GM13976 (cell line): ENCODE measurements at regions of chr12 and their contacts with region 1.

Region 1: DNA sequence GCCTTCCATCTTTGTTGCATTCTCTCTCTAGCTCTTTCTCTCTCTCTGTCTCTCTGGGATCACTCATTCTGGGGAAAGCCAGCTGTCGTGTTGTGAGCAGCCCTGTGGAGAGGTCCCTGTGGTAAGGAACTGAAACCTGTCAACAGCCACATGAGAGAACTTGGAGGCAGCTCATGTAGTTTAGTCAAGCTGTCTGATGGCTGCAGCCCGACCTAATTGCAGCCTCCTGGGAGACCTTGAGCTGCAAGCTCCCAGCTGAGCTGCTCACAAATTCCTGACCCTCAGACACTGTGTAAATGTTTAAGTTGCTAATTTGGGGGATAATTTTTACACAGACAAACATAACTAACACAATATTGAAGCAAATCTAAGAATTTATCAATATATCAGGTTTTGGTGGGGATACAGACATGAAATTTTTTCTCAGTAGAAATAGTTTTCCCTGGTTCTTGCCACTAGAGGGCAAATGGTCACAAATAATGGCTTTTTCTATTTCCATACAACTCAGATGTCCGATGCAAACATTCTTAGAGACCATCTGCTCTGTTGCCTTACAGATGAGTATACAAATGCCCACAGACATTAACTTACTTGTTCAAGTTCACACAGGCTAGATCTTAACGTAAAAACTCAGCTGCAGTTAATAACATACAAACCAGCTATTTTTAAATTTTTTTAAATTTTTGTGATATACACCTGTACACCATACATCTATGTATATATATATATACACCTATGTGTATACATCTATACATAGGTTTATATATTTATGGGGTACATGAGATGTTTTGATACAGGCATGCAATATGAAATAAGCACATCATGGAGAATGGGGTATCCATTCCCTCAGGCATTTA is 15.5 kb upstream of the KRR1 start:
- DNase-seq: peak; percentile 46
- CTCF ChIP-seq: peak; percentile 49

Region 2: GRCh38 chr12:74514098-74514872 is 1012.6 kb before region 1 on chr12:
- in situ Hi-C with region 1: no loop called
- DNase-seq: no peak
- CTCF ChIP-seq: no peak

Region 3: DNA sequence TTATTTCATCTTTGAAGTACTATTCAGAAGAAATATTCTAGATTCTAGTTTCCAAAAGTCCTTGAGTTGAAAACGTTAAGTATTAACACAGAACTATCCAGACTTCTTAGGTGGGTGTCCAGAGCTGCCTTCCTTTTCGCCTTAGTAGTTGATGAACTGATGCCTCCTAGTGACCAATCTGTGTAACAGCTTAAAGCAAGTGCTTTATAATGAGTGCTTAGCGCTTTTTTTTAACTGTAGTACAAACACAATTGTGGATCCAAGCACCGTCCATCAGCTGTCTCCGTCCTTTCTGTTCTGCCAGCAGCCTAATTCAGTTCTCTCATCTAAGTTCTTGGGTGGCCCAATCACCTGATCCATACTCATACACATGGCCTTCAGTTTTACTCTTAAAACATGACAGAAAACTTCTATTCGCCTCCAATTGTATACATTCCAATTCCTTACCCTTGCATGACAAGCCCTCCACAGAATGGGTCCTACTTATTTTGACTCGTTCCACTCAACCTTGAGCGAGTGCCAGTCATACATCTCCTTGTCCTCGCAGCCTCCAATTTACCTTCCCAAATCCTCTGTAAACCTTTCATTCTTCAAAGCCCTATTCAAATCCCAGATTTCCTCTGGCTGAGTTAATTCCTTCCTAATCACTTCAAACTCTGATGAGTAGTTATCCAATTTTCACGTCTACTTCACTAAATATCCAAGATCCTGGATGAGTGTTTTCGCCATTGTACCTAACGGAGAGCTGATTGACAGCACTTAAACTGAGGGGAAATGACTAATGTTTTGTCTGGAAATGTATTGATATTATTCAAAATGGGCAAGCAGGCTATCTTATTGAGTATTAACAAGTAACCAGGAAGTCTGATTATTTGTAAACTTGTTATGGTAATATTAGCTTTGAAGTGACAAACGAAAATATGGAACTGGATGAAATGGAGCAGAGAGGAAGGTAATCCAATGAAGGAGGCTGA is 510.5 kb after region 1 on chr12:
- in situ Hi-C with region 1: loop called (anchors 5 kb)
- DNase-seq: peak; percentile 50
- CTCF ChIP-seq: peak; percentile 65

Region 4: GRCh38 chr12:76348079-76348901 is 821.4 kb after region 1 on chr12 and contains the start of gene BBS10:
- in situ Hi-C with region 1: loop called (anchors 25 kb)
- DNase-seq: peak; percentile 90
- CTCF ChIP-seq: peak; percentile 37

Region 5: DNA sequence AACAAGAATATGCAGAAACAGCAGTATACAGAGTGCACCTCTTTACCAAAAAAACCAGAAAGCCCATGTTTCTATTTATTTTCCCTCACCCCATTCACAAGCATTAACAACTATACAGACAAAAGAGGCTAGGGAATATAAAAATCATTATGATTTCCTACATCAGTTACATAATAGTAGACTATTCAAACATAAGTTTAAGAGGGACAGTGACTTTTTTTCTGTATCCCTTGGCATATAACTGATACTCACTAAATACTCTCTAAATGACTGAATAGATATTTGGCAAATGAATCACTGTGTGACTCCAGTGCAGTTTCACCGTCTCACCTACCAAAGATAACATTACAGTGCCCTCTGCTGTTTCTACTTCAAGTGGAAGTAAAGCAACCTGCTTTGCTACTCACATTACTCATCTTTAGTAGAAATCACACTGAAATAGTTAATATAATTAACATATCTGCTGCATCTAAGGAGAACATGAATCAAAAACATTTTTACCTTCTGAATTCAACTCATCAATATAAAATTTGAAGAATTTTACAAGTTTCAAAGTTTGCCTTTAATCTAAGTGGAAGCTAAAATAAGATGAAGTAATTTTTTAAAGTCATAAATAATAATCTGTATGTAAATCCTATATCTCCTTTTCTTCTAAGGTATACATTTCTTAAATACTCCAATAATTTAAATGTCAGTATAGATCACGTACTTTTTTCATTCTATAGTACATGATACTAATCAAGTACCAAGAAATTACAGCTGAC is 928.9 kb after region 1 on chr12:
- in situ Hi-C with region 1: loop called (anchors 25 kb)
- DNase-seq: peak; percentile 47
- CTCF ChIP-seq: peak; percentile 52

Region 6: GRCh38 chr12:76559400-76560085 is 1032.7 kb after region 1 on chr12 and contains the start of gene OSBPL8:
- in situ Hi-C with region 1: loop called (anchors 25 kb)
- DNase-seq: peak; percentile 95
- CTCF ChIP-seq: peak; percentile 56